ENCODE measurements at regions of chr6 and their contacts with region 1.

Region 1: DNA sequence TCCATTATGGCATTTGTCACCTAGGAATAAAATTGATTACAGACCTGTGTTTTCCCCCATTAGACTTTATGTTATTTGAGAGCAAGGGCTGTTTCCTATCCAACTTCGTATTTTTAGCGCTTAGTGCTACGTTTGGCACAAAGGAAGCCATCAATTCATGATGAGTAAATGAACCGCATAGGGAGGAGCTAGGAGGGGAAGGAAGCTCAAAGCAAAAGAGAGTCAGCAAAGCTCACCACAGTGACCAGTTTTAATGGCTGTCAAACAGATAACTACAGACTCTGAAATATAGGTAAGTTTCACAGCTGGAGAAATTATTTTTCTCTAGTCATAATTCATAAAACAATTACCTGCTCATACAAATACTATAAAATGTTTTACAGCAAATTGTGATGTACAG is 6.9 kb upstream of the SAMD3 start:
- DNase-seq: no peak
- H3K4me3 ChIP-seq: no peak overlapping the region
- CTCF ChIP-seq: no peak

Region 2: GRCh38 chr6:130282234-130282995 is 52.8 kb after region 1 on chr6:
- in situ Hi-C with region 1: loop called (anchors 5 kb)
- DNase-seq: peak; percentile 32
- H3K4me3 ChIP-seq: no peak overlapping the region
- CTCF ChIP-seq: peak; percentile 64

Measured in astrocyte of the cerebellum (primary cell).